SK-N-SH (cell line): ENCODE measurements at regions of chr1 and their contacts with region 1.

Region 1: GRCh38 chr1:209850342-209850979 is 22.7 kb downstream of the UTP25 start:
- DNase-seq: peak; percentile 74
- H3K4me3 ChIP-seq: no peak overlapping the region
- H3K27ac ChIP-seq: peak overlapping the region in 1 of 2 experiments; percentile 80; a peak in 2 of 4 replicates
- H3K4me1 ChIP-seq: peaks cover 3 to 11% of the 10 kb centered on the region in 2 experiments; a peak in 3 of 4 replicates
- H3K27me3 ChIP-seq: no peaks in the 10 kb centered on the region
- CTCF ChIP-seq: peak; percentile 92
- EP300 ChIP-seq: no peak
- RAD21 ChIP-seq: peak; percentile 81

Region 2: GRCh38 chr1:209839875-209840491 is 10.5 kb before region 1 on chr1:
- CTCF ChIA-PET with region 1: interaction called, 33 read pairs
- POLR2A ChIA-PET with region 1: interaction called, 3 read pairs
- DNase-seq: no peak
- H3K4me3 ChIP-seq: peak overlapping the region in 1 of 2 experiments; percentile 16; a peak in 1 of 4 replicates
- H3K27ac ChIP-seq: peak overlapping the region; percentile 93 to 98
- H3K4me1 ChIP-seq: peaks cover 11 to 65% of the 10 kb centered on the region in 2 experiments
- H3K27me3 ChIP-seq: no peaks in the 10 kb centered on the region
- CTCF ChIP-seq: no peak
- EP300 ChIP-seq: peak in 1 of 2 experiments; percentile 95; a peak in 2 of 4 replicates
- RAD21 ChIP-seq: no peak